PC-3 (cell line): ENCODE measurements at regions of chr10 and their contacts with region 1.

Region 1: GRCh38 chr10:17607603-17608332 is 9.4 kb downstream of the HACD1 start:
- DNase-seq: peak; percentile 53
- ATAC-seq: peak; percentile 84
- H3K4me3 ChIP-seq: no peak overlapping the region
- H3K27ac ChIP-seq: no peak overlapping the region
- H3K4me1 ChIP-seq: no peaks in the 10 kb centered on the region
- H3K27me3 ChIP-seq: no peaks in the 10 kb centered on the region
- CTCF ChIP-seq: peak; percentile 67

Region 2: DNA sequence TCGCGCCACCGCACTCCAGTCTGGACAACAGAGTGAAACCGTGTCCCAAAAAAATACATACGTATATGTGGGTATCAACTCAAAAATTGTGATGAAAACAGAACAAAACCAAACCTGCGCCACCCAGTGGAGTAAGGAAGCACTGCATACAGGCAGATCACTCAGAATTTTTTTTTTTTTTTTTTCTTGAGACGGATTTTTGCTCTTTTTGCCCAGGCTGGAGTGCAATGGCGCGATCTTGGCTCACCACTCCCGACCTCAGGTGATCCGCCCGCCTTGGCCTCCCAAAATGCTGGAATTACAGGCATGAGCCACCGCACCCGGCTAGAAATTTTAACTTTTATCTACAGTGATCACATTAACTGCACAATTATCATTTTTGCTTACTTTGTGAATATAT is 135.2 kb after region 1 on chr10:
- CTCF ChIA-PET with region 1: no interaction called
- POLR2A ChIA-PET with region 1: no interaction called
- intact Hi-C with region 1: loop called (anchors 2 kb)
- DNase-seq: peak; percentile 49
- ATAC-seq: no peak; the same call in 1 of the 2 replicates
- H3K4me3 ChIP-seq: no peak overlapping the region
- H3K27ac ChIP-seq: no peak overlapping the region
- H3K4me1 ChIP-seq: no peaks in the 10 kb centered on the region
- H3K27me3 ChIP-seq: no peaks in the 10 kb centered on the region
- CTCF ChIP-seq: peak; percentile 55

Region 3: DNA sequence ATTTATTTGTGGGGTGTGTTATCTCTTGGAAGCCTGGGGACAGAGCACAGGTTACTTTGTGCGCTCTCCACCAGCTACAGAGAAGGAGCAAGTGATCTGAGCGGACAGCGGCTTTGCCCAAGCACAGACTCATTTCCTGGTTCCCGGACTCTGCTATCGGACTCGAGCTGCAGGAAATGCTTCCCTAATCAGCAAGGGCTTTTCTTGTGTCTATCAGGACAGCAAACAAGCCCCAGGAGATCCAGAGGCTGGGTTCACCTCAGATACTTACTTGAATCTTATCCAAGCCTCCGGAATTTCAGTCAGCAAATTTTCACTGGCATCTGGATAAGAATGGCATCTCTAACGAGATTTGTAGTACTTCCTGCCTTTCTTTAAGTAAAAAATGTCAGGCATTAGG is 229.2 kb after region 1 on chr10:
- CTCF ChIA-PET with region 1: no interaction called
- POLR2A ChIA-PET with region 1: no interaction called
- intact Hi-C with region 1: loop called (anchors 5 kb)
- DNase-seq: peak; percentile 46
- ATAC-seq: peak; percentile 61
- H3K4me3 ChIP-seq: peak overlapping the region; percentile 60
- H3K27ac ChIP-seq: peak overlapping the region; percentile 43
- H3K4me1 ChIP-seq: peaks cover 29% of the 10 kb centered on the region
- H3K27me3 ChIP-seq: no peaks in the 10 kb centered on the region
- CTCF ChIP-seq: 0 out of 2 replicates have a peak, but pooled peaks have one; percentile 9

Region 4: DNA sequence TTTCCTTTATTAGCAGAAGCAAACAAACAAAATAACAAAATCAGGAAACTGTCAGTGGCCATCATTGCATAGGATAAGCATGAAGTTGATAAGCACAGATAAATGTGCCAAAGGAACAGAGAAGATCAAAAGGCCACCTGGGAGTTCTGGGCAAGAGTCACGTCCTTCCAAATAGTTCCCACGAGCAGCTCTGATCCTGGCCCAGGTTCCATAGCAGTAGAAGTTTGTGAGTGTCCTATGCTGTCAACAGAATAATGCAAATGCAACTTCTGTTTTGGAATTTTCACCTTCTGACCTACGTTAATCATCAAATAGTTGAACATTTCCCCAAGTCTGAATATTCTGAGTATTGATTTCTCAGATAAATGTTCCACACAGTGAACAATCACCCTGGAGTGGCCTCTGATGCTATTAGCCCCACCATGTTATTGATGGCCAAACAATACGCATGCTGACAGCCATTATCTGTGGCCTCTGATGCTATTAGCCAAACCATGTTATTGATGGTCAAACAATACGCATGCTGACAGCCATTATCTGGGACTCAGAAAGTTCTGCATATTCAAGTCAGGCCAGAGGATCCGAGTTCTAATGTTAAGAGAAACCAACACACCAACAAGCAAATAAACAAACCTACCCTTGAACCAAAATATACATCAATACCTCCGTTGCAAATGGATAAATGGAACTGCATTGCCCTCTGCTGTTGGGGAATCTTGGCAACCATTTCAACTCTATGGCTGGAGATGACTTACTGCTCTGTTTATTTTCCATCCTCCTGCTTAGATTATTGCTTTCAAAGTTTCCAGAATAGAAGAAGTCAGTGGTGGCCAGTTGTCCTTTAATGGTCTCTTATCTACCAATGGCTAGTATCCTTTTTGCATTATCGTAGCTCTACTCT is 264.7 kb after region 1 on chr10:
- CTCF ChIA-PET with region 1: no interaction called
- POLR2A ChIA-PET with region 1: no interaction called
- intact Hi-C with region 1: loop called (anchors 2 kb)
- DNase-seq: peak; percentile 44
- ATAC-seq: 0 out of 2 replicates have a peak, but pooled peaks have one; percentile 40
- H3K4me3 ChIP-seq: no peak overlapping the region
- H3K27ac ChIP-seq: no peak overlapping the region
- H3K4me1 ChIP-seq: no peaks in the 10 kb centered on the region
- H3K27me3 ChIP-seq: no peaks in the 10 kb centered on the region
- CTCF ChIP-seq: peak; percentile 59

Region 5: DNA sequence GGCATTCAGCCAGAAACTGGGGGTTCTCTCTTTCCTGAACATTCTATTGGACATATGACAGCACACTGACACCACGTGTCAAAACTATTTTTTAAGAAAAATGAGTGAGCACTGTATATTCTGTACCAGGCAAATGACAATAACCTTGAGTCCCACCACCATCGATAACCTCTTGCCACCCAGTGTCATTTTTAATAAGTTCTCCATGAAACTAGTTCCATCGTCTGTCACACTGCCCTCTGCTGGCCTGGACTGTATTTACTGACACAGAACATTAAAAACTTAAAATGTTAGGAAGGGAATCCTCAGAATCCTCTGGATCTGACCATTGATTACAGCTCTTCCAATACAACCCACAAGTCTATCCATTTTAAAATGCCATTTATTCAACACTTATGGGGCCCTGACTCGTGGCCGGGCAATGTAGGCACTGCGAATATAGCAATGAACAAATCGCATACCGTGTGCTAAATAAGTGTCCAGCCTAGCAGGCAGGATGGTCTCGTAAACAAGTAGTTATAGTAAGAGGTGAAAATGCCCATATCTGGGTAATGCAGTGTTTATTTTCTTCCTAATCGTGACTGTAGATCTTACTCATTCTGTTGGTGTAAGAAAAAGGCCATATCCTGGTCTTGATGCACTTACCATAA is 496.6 kb after region 1 on chr10:
- CTCF ChIA-PET with region 1: no interaction called
- POLR2A ChIA-PET with region 1: no interaction called
- intact Hi-C with region 1: loop called (anchors 2 kb)
- DNase-seq: peak; percentile 52
- ATAC-seq: no peak
- H3K4me3 ChIP-seq: no peak overlapping the region
- H3K27ac ChIP-seq: no peak overlapping the region
- H3K4me1 ChIP-seq: no peaks in the 10 kb centered on the region
- H3K27me3 ChIP-seq: no peaks in the 10 kb centered on the region
- CTCF ChIP-seq: peak; percentile 71